Caki2 (cell line): ENCODE measurements at regions of chr11 and their contacts with region 1.

Region 1: GRCh38 chr11:119121008-119121810 is at the start of gene HINFP:
- DNase-seq: peak; percentile 95
- total RNA-seq, gene HINFP: 7.7 and 11.0 TPM in 2 replicates

Region 2: GRCh38 chr11:119323538-119324033 is 202.4 kb after region 1 on chr11:
- in situ Hi-C with region 1: loop called (anchors 25 kb)
- DNase-seq: peak; percentile 35

Region 3: GRCh38 chr11:119338318-119338907 is 217.2 kb after region 1 on chr11:
- in situ Hi-C with region 1: no loop called
- DNase-seq: peak; percentile 51